ENCODE measurements at regions of chr19 and their contacts with region 1.

Region 1: DNA sequence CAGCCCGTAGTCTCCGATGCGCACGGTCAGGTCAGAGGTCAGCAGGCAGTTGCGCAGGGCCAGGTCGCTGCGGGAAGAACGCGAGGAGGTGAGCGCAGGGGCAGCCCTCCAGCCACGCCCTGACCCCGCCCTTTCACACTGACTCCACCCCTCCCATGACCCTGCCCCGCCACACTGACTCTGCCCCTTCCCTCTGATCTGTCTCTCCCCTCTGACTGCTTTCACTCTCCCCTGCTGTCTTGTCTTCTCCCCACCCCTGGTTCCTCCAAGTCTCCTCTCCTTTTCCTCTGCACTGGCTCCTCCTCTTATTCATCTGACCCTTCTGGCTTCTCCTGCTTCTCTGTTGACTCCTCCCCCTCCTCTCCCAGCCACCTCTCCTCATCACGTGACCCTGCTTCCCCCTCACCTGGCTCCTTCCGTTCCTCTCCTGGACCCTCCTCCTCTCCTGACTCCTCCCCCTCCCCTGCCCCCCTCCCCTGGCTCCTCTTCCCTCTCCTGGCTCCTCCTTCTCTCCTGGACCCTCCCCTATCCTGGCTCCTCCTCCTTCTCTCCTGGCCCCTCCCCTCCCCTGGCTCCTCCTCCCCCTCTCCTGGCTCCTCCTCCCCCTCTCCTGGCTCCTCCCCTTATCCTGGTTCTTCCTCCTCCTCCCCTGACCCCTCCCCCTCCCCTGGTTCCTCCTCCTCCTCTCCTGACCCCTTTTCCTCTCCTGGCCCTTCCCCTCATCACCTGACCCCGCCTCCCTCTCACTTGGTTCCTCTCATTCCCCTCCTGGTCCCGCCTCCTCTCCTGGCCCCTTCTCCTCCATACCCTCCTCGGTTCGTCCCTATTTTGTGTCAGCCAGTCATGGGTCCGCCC is 9.9 kb downstream of the LMTK3 start:
- DNase-seq: no peak
- H3K4me3 ChIP-seq: peak overlapping the region in 3 of 8 donors; percentile 4 to 53 (median 6)
- H3K27ac ChIP-seq: peak overlapping the region in 4 of 8 donors; percentile 22 to 70 (median 44)
- H3K4me1 ChIP-seq: peaks cover 4 to 42% (median 9%) of the 10 kb centered on the region in 6 donors
- H3K27me3 ChIP-seq: peaks cover 0 to 61% (median 48%) of the 10 kb centered on the region in 7 donors
- CTCF ChIP-seq: no peak
- POLR2A ChIP-seq: no peak

Region 2: GRCh38 chr19:48588670-48589399 is 87.1 kb after region 1 on chr19:
- intact Hi-C with region 1: loop called (anchors 10 kb)
- DNase-seq: peak; percentile 98
- H3K4me3 ChIP-seq: peak overlapping the region in 7 of 8 donors; percentile 8 to 68 (median 27)
- H3K27ac ChIP-seq: peak overlapping the region in 2 of 8 donors; percentile 61 to 76
- H3K4me1 ChIP-seq: peaks cover 0 to 18% (median 15%) of the 10 kb centered on the region in 6 donors
- H3K27me3 ChIP-seq: peaks cover 0 to 25% (median 0%) of the 10 kb centered on the region in 7 donors
- CTCF ChIP-seq: peak; percentile 86 to 96 (median 94)
- POLR2A ChIP-seq: no peak

Region 3: DNA sequence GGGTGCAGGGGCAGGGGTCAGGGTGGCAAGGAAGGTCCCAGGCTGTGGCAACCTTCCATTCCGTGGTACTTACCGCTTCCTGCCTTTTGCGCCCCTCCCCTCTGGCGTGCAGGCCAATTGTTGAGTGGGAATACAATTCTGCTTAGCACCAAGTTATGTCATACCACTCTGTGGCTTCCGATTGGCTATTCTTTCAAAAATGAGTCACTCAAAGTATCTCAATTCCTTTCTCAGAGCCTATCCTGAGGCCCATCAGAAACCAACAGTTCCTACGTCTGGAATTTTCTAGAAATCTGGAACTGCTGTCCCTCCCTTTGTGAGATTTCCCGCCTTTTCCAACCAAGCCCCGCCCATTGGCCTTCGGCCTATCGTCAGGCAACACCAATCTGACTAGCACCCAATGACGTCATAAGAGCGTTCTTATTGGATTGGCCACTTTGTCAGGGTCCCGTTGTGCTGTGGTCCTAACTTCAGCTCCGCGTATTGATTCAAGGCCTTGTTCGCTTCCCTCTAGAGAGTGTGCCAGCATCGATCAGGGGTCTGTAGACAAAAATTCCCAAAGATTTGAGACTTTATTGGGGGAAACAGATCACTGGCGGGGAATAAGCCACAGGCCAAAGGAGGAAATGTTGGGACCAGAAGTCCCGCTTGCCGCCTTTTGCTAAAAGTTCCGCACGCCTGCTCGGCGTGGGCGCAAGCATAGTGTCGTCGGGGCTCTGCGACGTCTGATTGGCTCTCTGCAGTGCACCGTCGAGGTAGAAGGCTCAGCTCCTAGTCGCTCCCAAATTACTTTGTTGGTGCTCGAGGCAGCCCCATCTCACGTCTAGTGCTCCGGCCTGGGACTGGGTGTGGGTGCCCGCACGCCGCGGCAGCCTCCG is 159.4 kb after region 1 on chr19:
- intact Hi-C with region 1: no loop called
- DNase-seq: peak; percentile 89
- H3K4me3 ChIP-seq: peak overlapping the region in 4 of 8 donors; percentile 5 to 55 (median 10)
- H3K27ac ChIP-seq: peak overlapping the region; percentile 62 to 85 (median 74)
- H3K4me1 ChIP-seq: peaks cover 10 to 21% (median 17%) of the 10 kb centered on the region in 6 donors
- H3K27me3 ChIP-seq: no peaks in the 10 kb centered on the region
- CTCF ChIP-seq: peak in 2 of 11 experiments; percentile 15 to 24
- POLR2A ChIP-seq: no peak

Region 4: GRCh38 chr19:48734625-48735555 is 233.2 kb after region 1 on chr19:
- intact Hi-C with region 1: no loop called
- DNase-seq: no peak
- H3K4me3 ChIP-seq: peak overlapping the region in 1 of 8 donors; percentile 30
- H3K27ac ChIP-seq: no peak overlapping the region
- H3K4me1 ChIP-seq: peaks cover 0 to 33% (median 19%) of the 10 kb centered on the region in 6 donors
- H3K27me3 ChIP-seq: peaks cover 0 to 10% (median 9%) of the 10 kb centered on the region in 7 donors
- CTCF ChIP-seq: no peak
- POLR2A ChIP-seq: no peak

Measured in spleen (tissue), 13 donors.